Calu3 (cell line): ENCODE measurements at regions of chr2 and their contacts with region 1.

Region 1: GRCh38 chr2:104944495-104944894 is 90.6 kb downstream of the POU3F3 start:
- DNase-seq: peak; percentile 50
- H3K4me3 Mint-ChIP-seq: no peak overlapping the region
- H3K27ac Mint-ChIP-seq: no peak overlapping the region
- H3K4me1 Mint-ChIP-seq: peaks cover 10% of the 10 kb centered on the region
- H3K27me3 Mint-ChIP-seq: no peaks in the 10 kb centered on the region
- CTCF ChIP-seq: peak; percentile 38

Region 2: GRCh38 chr2:103959174-103960128 is 985.0 kb before region 1 on chr2:
- CTCF ChIA-PET with region 1: no interaction called
- intact Hi-C with region 1: loop called (anchors 5 kb)
- DNase-seq: peak; percentile 32
- H3K4me3 Mint-ChIP-seq: no peak overlapping the region
- H3K27ac Mint-ChIP-seq: no peak overlapping the region
- H3K4me1 Mint-ChIP-seq: no peaks in the 10 kb centered on the region
- H3K27me3 Mint-ChIP-seq: no peaks in the 10 kb centered on the region
- CTCF ChIP-seq: peak; percentile 32